ENCODE measurements at regions of chr20 and their contacts with region 1.

Region 1: GRCh38 chr20:51800060-51800794 is 2.1 kb downstream of the SALL4 start:
- DNase-seq: peak; percentile 98
- ATAC-seq: peak; percentile 73
- H3K4me3 Mint-ChIP-seq: peak overlapping the region; percentile 95
- H3K27ac Mint-ChIP-seq: peak overlapping the region; percentile 97
- H3K4me1 Mint-ChIP-seq: peaks cover 50% of the 10 kb centered on the region
- H3K27me3 Mint-ChIP-seq: no peaks in the 10 kb centered on the region
- CTCF ChIP-seq: peak; percentile 84

Region 2: DNA sequence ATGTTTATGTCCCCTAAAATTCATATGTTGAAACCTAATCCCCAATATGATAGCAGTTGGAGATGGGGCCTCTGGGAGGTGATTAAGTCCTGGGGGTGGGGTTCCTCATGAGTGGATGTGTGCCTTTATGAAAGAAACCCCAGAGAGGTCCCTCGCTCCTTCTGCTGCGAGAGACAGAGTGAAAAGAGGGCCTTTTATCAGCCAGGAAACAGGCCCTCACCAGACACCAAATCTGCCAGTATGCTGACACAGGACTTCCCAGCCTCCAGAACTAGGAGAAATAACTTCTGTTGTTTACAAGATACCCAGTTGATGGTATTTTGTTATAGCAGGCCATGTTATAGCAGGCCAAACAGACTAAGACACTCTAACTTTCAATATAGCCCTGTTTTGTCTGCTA is 156.8 kb before region 1 on chr20:
- CTCF ChIA-PET with region 1: interaction called, 12 read pairs
- POLR2A ChIA-PET with region 1: no interaction called
- DNase-seq: no peak
- ATAC-seq: no peak
- H3K4me3 Mint-ChIP-seq: no peak overlapping the region
- H3K27ac Mint-ChIP-seq: no peak overlapping the region
- H3K4me1 Mint-ChIP-seq: peaks cover 11% of the 10 kb centered on the region
- H3K27me3 Mint-ChIP-seq: no peaks in the 10 kb centered on the region
- CTCF ChIP-seq: no peak

Region 3: DNA sequence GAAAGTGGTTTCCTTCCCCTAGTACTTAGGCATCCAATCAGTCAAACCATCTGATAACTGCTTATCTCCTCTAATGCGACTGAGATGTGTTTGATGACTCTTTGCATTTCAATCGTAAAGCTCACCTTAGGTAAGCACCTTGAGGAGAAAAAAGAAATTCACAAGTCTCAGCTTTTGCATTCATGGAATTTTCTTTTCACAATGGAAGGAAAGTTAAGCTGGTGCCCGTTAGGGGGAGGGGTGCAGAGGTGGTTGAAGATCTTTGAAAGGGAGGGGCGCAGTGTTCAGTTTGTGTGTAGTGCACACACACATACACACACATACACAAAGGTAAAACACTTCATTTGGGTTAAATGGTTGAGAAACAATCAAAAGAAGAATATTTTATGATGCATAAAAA is 89.2 kb after region 1 on chr20:
- CTCF ChIA-PET with region 1: interaction called, 10 read pairs
- POLR2A ChIA-PET with region 1: interaction called, 3 read pairs
- DNase-seq: no peak
- ATAC-seq: peak; percentile 48
- H3K4me3 Mint-ChIP-seq: peak overlapping the region; percentile 46
- H3K27ac Mint-ChIP-seq: peak overlapping the region; percentile 88
- H3K4me1 Mint-ChIP-seq: peaks cover 53% of the 10 kb centered on the region
- H3K27me3 Mint-ChIP-seq: no peaks in the 10 kb centered on the region
- CTCF ChIP-seq: no peak

Region 4: GRCh38 chr20:52047811-52048764 is 247.9 kb after region 1 on chr20:
- CTCF ChIA-PET with region 1: interaction called, 27 read pairs
- POLR2A ChIA-PET with region 1: interaction called, 4 read pairs
- DNase-seq: peak; percentile 38
- ATAC-seq: peak; percentile 27
- H3K4me3 Mint-ChIP-seq: peak overlapping the region; percentile 59
- H3K27ac Mint-ChIP-seq: peak overlapping the region; percentile 99
- H3K4me1 Mint-ChIP-seq: peaks cover 45% of the 10 kb centered on the region
- H3K27me3 Mint-ChIP-seq: no peaks in the 10 kb centered on the region
- CTCF ChIP-seq: no peak

Region 5: GRCh38 chr20:52104546-52105441 is 304.6 kb after region 1 on chr20:
- CTCF ChIA-PET with region 1: interaction called, 25 read pairs
- POLR2A ChIA-PET with region 1: interaction called, 4 read pairs
- DNase-seq: peak; percentile 76
- ATAC-seq: peak; percentile 20
- H3K4me3 Mint-ChIP-seq: peak overlapping the region; percentile 87
- H3K27ac Mint-ChIP-seq: peak overlapping the region; percentile 97
- H3K4me1 Mint-ChIP-seq: peaks cover 27% of the 10 kb centered on the region
- H3K27me3 Mint-ChIP-seq: peaks cover 68% of the 10 kb centered on the region
- CTCF ChIP-seq: no peak